ENCODE measurements at regions of chr6 and their contacts with region 1.

Region 1: GRCh38 chr6:29797966-29798365 is 29.7 kb upstream of the HLA-G start:
- DNase-seq: no peak
- ATAC-seq: no peak
- H3K4me3 ChIP-seq: no peak overlapping the region
- H3K4me3 Mint-ChIP-seq: no peak overlapping the region
- H3K27ac ChIP-seq: no peak overlapping the region
- H3K27ac Mint-ChIP-seq: no peak overlapping the region
- H3K4me1 ChIP-seq: peaks cover 4% of the 10 kb centered on the region
- H3K4me1 Mint-ChIP-seq: peaks cover 6% of the 10 kb centered on the region in 2 donors
- H3K27me3 ChIP-seq: peaks cover 19% of the 10 kb centered on the region
- H3K27me3 Mint-ChIP-seq: peaks cover 33 to 49% of the 10 kb centered on the region in 2 donors
- CTCF ChIP-seq: no peak

Region 2: DNA sequence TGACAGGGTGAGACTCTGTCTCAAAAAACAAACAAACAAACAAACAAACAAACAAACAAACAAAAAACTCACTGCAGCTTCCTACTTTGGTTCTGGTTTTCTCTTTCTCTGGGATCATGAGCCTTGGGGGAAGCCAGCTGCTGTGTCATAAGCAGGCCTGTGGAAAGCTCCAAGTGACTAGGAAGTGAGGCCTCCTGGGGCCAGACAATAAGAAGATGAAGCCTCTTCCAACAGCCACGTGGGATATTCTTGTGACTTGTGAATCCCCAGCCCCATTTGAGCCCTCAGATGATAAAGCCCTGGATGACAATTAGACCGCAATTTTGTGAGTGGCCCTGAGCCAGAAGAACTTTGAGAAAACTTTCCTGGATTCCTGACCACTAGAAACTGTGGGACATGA is 155.7 kb after region 1 on chr6:
- intact Hi-C with region 1: loop called (anchors 2 kb)
- DNase-seq: no peak
- ATAC-seq: no peak
- H3K4me3 ChIP-seq: no peak overlapping the region
- H3K4me3 Mint-ChIP-seq: no peak overlapping the region
- H3K27ac ChIP-seq: no peak overlapping the region
- H3K27ac Mint-ChIP-seq: no peak overlapping the region
- H3K4me1 ChIP-seq: no peaks in the 10 kb centered on the region
- H3K4me1 Mint-ChIP-seq: peaks cover 29% of the 10 kb centered on the region in 2 donors
- H3K27me3 ChIP-seq: no peaks in the 10 kb centered on the region
- H3K27me3 Mint-ChIP-seq: no peaks in the 10 kb centered on the region
- CTCF ChIP-seq: no peak